Common myeloid progenitor, CD34-positive (primary cell): ENCODE measurements at regions of chr12 and their contacts with region 1.

Region 1: GRCh38 chr12:29176941-29177340 is 27.9 kb downstream of the FAR2 start:
- DNase-seq: no peak
- H3K4me3 ChIP-seq: no peak overlapping the region
- H3K27ac ChIP-seq: no peak overlapping the region
- H3K4me1 ChIP-seq: peaks cover 0 to 6% (median 0%) of the 10 kb centered on the region in 4 experiments
- H3K27me3 ChIP-seq: no peaks in the 10 kb centered on the region

Region 2: DNA sequence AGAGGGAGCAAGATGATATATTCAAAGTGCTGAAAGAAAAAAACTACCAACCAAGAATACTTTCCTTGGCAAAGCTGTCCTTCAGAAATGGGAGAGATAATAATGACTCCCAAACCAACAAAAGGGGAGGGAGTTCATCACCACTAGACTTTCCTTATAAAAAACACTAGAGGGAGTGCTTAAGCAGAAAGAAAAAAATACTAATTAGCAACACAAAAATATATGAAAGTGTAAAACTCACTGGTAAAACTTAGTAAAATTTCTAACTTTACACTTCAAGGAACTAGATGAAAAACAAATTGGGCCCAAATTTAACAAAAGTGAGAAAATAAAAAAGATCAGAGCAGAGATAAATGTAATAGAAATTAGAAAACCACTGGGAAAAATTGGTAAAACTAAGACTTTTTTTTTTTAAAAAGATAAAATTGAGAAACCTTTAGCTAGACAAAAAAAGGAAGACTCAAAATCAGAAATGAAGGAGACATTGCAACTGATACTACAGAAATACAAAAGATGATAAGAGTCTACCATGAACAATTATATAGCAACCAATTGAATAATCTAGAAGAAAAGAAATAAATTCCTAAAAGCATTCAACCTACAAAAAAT is 88.2 kb before region 1 on chr12:
- CTCF ChIA-PET with region 1: no interaction called
- POLR2A ChIA-PET with region 1: no interaction called
- DNase-seq: peak in 1 of 3 donors; percentile 33
- H3K4me3 ChIP-seq: no peak overlapping the region
- H3K27ac ChIP-seq: no peak overlapping the region
- H3K4me1 ChIP-seq: no peaks in the 10 kb centered on the region
- H3K27me3 ChIP-seq: no peaks in the 10 kb centered on the region

Region 3: GRCh38 chr12:29191267-29191845 is 14.4 kb after region 1 on chr12:
- CTCF ChIA-PET with region 1: interaction called, 12 read pairs
- POLR2A ChIA-PET with region 1: interaction called, 3 read pairs
- DNase-seq: no peak
- H3K4me3 ChIP-seq: no peak overlapping the region
- H3K27ac ChIP-seq: no peak overlapping the region
- H3K4me1 ChIP-seq: no peaks in the 10 kb centered on the region
- H3K27me3 ChIP-seq: no peaks in the 10 kb centered on the region